Dendritic cell treated with granulocyte-macrophage colony-stimulating factor and Interleukin-4, amounts not matched to agents 40 ng/mL and 50 ng/mL, for 4 days (primary cell): ENCODE measurements at regions of chr12 and their contacts with region 1.

Region 1: GRCh38 chr12:14845350-14845750 is 2.0 kb upstream of the ART4 start:
- H3K4me3 Mint-ChIP-seq: no peak overlapping the region
- H3K27ac Mint-ChIP-seq: peak overlapping the region; percentile 57
- H3K4me1 Mint-ChIP-seq: peaks cover 6% of the 10 kb centered on the region
- H3K27me3 Mint-ChIP-seq: no peaks in the 10 kb centered on the region

Region 2: DNA sequence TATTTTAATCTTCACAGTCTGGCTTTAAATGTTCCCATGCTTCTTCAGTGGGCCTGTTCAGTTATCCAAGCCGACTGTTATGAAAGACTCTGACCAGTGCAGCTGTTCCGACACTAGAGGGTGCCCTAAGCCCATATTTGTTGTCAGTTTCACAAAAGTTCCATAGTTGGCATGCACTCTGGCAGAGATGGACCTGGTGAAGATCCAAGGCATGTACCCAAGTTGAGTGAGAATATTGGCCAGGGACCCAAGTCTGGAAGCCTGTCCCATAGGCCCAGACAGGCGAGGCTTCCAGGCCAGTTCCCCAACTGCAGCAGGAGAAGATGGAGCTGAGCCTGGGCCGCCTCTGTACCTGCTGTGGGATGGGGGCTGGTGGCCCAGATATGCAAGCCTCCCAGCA is 121.6 kb before region 1 on chr12:
- intact Hi-C with region 1: loop called (anchors 5 kb)
- H3K4me3 Mint-ChIP-seq: no peak overlapping the region
- H3K27ac Mint-ChIP-seq: no peak overlapping the region
- H3K4me1 Mint-ChIP-seq: no peaks in the 10 kb centered on the region
- H3K27me3 Mint-ChIP-seq: peaks cover 1% of the 10 kb centered on the region

Region 3: DNA sequence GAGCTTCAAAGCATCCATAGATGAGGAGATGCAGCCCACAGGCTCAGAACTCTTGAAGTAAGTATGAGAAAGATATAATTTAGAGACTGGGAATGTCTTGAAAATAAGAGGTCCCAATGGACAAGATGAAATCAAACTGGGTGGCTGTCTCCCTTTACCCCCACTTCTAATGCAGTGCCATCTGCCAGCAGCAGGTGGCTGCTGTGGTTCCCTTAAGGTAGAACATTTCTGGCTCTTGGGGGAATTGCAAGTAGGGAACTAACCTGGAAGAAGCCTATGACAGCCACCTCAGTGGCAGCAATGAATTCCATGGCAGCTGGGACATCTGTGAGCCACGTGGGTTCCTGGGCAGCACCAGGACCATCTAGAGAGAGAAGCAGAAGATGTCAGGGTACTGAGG is 92.3 kb after region 1 on chr12:
- intact Hi-C with region 1: loop called (anchors 5 kb)
- H3K4me3 Mint-ChIP-seq: no peak overlapping the region
- H3K27ac Mint-ChIP-seq: no peak overlapping the region
- H3K4me1 Mint-ChIP-seq: peaks cover 29% of the 10 kb centered on the region
- H3K27me3 Mint-ChIP-seq: no peaks in the 10 kb centered on the region

Region 4: DNA sequence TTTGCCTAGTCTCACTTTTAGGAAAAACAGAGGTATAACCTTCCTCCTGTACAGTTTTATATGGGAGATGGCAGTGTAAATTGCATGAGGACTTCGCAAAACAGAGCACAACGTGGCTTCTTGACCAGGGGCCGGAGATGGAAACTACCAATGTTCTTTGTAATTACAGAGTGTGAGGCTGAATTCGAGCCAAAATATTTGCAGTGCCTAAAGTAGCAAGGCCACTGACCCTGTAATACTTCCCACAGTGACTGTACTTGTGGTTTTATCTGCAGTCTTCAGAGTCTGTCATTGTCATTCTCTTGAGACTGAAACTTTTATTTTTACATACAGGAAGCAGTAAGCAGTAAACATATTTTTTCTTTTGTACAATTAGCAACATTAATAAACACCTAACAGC is 277.0 kb after region 1 on chr12:
- intact Hi-C with region 1: no loop called
- H3K4me3 Mint-ChIP-seq: no peak overlapping the region
- H3K27ac Mint-ChIP-seq: no peak overlapping the region
- H3K4me1 Mint-ChIP-seq: no peaks in the 10 kb centered on the region
- H3K27me3 Mint-ChIP-seq: no peaks in the 10 kb centered on the region

Region 5: GRCh38 chr12:15220994-15221885 is 375.9 kb after region 1 on chr12 and contains the start of gene RERG:
- intact Hi-C with region 1: loop called (anchors 10 kb)
- H3K4me3 Mint-ChIP-seq: peak within 1 kb of the TSS; percentile 65
- H3K27ac Mint-ChIP-seq: no peak within 1 kb of the TSS
- H3K4me1 Mint-ChIP-seq: peaks cover 8% of the 10 kb centered on the region
- H3K27me3 Mint-ChIP-seq: peaks cover 26% of the 10 kb centered on the region

Region 6: DNA sequence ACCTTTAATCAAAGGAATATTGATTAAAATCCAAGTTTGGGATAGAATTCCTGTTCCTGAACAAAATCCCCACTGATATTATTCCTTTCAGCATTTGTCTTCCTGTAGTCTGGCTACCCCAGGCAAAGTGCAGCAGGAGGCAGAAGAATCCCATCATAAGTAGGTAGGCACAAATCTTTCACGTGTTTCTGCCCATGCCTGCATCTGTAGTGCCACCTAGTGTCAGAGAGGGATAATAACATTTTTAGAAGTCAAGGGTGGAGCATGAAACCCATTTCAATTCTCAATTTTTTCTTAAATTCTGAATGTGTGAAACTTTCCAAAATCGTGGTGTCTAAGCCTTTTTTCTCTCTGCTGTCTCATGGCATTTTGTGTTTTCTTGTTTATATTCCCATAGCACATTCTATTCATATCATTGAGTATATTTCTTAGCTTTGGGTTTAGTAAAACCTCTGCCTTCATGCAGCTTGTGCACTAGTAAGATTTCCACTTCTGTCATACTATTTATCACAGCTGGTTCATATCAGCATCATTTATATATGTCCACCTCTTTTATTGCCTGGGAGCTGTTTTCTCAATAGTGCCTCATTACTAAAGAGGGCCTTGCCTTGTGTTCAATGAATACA is 423.7 kb after region 1 on chr12:
- intact Hi-C with region 1: loop called (anchors 5 kb)
- H3K4me3 Mint-ChIP-seq: no peak overlapping the region
- H3K27ac Mint-ChIP-seq: no peak overlapping the region
- H3K4me1 Mint-ChIP-seq: no peaks in the 10 kb centered on the region
- H3K27me3 Mint-ChIP-seq: peaks cover 4% of the 10 kb centered on the region